ENCODE measurements at regions of chr21 and their contacts with region 1.

Region 1: DNA sequence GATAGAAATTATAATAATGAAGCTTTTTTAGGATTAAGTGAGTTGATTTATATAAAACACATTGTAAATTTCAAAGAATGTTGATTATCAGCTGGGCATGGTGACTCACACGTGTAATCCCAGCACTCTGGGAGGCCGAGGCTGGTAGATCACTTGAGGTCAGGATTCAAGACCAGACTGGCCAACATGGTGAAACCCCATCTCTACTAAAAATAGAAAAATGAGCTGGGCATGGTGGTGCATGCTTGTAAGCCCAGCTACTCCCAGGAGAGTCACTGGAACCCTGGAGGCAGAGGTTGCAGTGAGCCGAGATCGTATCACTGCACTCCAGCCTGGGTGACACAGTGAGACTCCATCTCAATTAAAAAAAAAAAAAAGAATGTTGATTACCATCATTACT is 18.4 kb downstream of the ADAMTS1 start:
- DNase-seq: peak; percentile 69
- H3K4me3 Mint-ChIP-seq: no peak overlapping the region
- H3K27ac Mint-ChIP-seq: no peak overlapping the region
- H3K4me1 Mint-ChIP-seq: peaks cover 11% of the 10 kb centered on the region
- H3K27me3 Mint-ChIP-seq: no peaks in the 10 kb centered on the region
- CTCF ChIP-seq: no peak

Region 2: GRCh38 chr21:26814374-26814773 is 12.4 kb before region 1 on chr21:
- CTCF ChIA-PET with region 1: interaction called, 11 read pairs
- POLR2A ChIA-PET with region 1: interaction called, 3 read pairs
- intact Hi-C with region 1: no loop called
- DNase-seq: no peak
- H3K4me3 Mint-ChIP-seq: no peak overlapping the region
- H3K27ac Mint-ChIP-seq: no peak overlapping the region
- H3K4me1 Mint-ChIP-seq: peaks cover 7% of the 10 kb centered on the region
- H3K27me3 Mint-ChIP-seq: no peaks in the 10 kb centered on the region
- CTCF ChIP-seq: no peak

Region 3: DNA sequence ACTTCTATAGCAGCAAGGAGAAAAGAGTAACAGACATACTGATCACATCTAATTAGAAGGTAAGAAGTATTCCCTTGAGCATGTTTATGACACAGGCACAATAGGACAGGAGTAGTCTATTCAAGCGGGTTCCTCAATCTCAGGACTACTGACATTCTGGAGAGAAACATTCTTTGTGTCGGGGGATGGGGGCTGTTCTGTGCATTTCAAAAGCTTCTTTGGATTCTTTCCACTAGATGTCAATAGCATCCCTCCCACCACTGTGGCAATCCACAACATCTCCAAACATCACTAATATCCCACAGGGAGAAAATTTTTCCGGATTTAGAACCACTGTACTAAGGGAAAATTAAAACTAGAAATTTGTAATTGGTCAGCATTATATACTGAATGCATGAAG is 83.2 kb after region 1 on chr21:
- CTCF ChIA-PET with region 1: no interaction called
- POLR2A ChIA-PET with region 1: no interaction called
- intact Hi-C with region 1: no loop called
- DNase-seq: peak; percentile 9
- H3K4me3 Mint-ChIP-seq: no peak overlapping the region
- H3K27ac Mint-ChIP-seq: no peak overlapping the region
- H3K4me1 Mint-ChIP-seq: no peaks in the 10 kb centered on the region
- H3K27me3 Mint-ChIP-seq: no peaks in the 10 kb centered on the region
- CTCF ChIP-seq: no peak